CD14-positive monocyte (primary cell): ENCODE measurements at regions of chr6 and their contacts with region 1.

Region 1: GRCh38 chr6:13526727-13527670 is 39.6 kb upstream of the GFOD1 start:
- DNase-seq: peak; percentile 83 to 90 (median 90)
- H3K4me3 ChIP-seq: no peak overlapping the region
- H3K4me3 Mint-ChIP-seq: peak overlapping the region in 1 of 2 donors; percentile 51
- H3K27ac ChIP-seq: peak overlapping the region; percentile 79 to 93
- H3K27ac Mint-ChIP-seq: peak overlapping the region; percentile 79 to 91 (median 87)
- H3K4me1 ChIP-seq: peaks cover 32 to 35% of the 10 kb centered on the region in 2 donors
- H3K4me1 Mint-ChIP-seq: peaks cover 40% of the 10 kb centered on the region
- H3K27me3 ChIP-seq: no peaks in the 10 kb centered on the region
- H3K27me3 Mint-ChIP-seq: peaks cover 0 to under 1% (median 0%) of the 10 kb centered on the region in 3 donors
- CTCF ChIP-seq: peak; percentile 3

Region 2: DNA sequence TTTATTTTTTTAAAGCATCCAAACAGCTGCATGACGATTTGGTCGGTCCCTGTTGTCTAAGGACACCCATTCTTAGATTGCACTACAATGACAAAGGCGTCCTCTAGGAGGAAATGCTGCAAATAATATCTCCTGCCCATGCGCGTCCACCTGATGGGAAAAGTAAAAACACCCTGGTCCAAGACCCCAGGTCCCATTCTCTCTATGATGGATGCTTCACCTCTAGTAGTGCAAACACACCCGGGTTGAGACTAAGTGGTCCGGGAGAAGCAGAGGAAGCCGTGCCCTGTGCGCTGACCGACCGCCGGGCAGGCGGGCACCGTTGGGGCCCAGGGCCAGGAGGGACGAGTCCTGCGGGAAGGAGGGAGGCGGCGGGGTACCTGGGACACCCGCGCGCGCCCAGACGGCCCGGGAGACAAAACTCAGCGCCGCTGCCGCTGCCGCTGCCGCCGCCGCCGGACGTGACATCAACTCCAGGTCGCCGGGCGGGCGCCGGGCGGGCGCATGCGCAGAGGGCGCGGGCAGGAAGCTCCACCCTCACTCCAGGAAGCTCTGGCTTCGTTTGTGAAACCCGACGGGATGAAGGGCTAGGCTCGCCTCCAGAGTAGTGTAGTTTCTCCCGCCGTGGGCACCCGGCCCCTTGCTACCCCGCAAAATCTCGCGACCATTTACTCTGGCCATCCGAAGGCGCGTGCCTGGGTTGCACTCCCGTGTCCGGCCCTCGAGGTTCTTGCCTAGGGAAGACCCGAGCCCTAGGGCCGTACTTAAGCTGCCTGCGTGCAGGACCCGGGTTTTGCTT is 198.7 kb before region 1 on chr6 and contains the start of gene TBC1D7:
- intact Hi-C with region 1: loop called in 1 of 2 experiments (anchors 5 kb)
- DNase-seq: peak; percentile 87 to 91 (median 91)
- H3K4me3 ChIP-seq: peak within 1 kb of the TSS; percentile 88 to 98 (median 92)
- H3K4me3 Mint-ChIP-seq: peak within 1 kb of the TSS; percentile 90 to 93
- H3K27ac ChIP-seq: peak within 1 kb of the TSS; percentile 75 to 92
- H3K27ac Mint-ChIP-seq: peak within 1 kb of the TSS; percentile 93 to 98 (median 96)
- H3K4me1 ChIP-seq: peaks cover 6 to 17% of the 10 kb centered on the region in 2 donors
- H3K4me1 Mint-ChIP-seq: peaks cover 21% of the 10 kb centered on the region
- H3K27me3 ChIP-seq: no peaks in the 10 kb centered on the region
- H3K27me3 Mint-ChIP-seq: no peaks in the 10 kb centered on the region
- CTCF ChIP-seq: peak; percentile 19
- polyA plus RNA-seq, gene TBC1D7: 12.2 to 34.3 (median 34.3) TPM

Region 3: GRCh38 chr6:13407709-13408695 is 119.0 kb before region 1 on chr6:
- intact Hi-C with region 1: loop called in 1 of 2 experiments (anchors 5 kb)
- DNase-seq: peak; percentile 92 to 97 (median 94)
- H3K4me3 ChIP-seq: peak overlapping the region in 1 of 3 experiments; percentile 27
- H3K4me3 Mint-ChIP-seq: no peak overlapping the region
- H3K27ac ChIP-seq: peak overlapping the region; percentile 91 to 98
- H3K27ac Mint-ChIP-seq: peak overlapping the region; percentile 99 to 100 (median 100)
- H3K4me1 ChIP-seq: peaks cover 81 to 98% of the 10 kb centered on the region in 2 donors
- H3K4me1 Mint-ChIP-seq: peaks cover 87% of the 10 kb centered on the region
- H3K27me3 ChIP-seq: no peaks in the 10 kb centered on the region
- H3K27me3 Mint-ChIP-seq: peaks cover 0 to 6% (median 0%) of the 10 kb centered on the region in 3 donors
- CTCF ChIP-seq: no peak

Region 4: GRCh38 chr6:13487122-13488014 is 39.6 kb before region 1 on chr6 and contains the start of gene GFOD1:
- intact Hi-C with region 1: loop called in 1 of 2 experiments (anchors 5 kb)
- DNase-seq: peak; percentile 72 to 79 (median 77)
- H3K4me3 ChIP-seq: peak within 1 kb of the TSS; percentile 61 to 92 (median 64)
- H3K4me3 Mint-ChIP-seq: peak within 1 kb of the TSS; percentile 98 to 99
- H3K27ac ChIP-seq: peak within 1 kb of the TSS; percentile 75 to 86
- H3K27ac Mint-ChIP-seq: peak within 1 kb of the TSS; percentile 46 to 92 (median 86)
- H3K4me1 ChIP-seq: peaks cover 27 to 44% of the 10 kb centered on the region in 2 donors
- H3K4me1 Mint-ChIP-seq: peaks cover 47% of the 10 kb centered on the region
- H3K27me3 ChIP-seq: peaks cover 0 to 7% of the 10 kb centered on the region in 2 donors
- H3K27me3 Mint-ChIP-seq: peaks cover 3 to 14% (median 14%) of the 10 kb centered on the region in 3 donors
- CTCF ChIP-seq: peak; percentile 17
- polyA plus RNA-seq, gene GFOD1: 2.4 to 8.7 (median 2.4) TPM

Region 5: GRCh38 chr6:13496513-13497180 is 30.4 kb before region 1 on chr6:
- intact Hi-C with region 1: loop called in 1 of 2 experiments (anchors 5 kb)
- DNase-seq: no peak
- H3K4me3 ChIP-seq: no peak overlapping the region
- H3K4me3 Mint-ChIP-seq: no peak overlapping the region
- H3K27ac ChIP-seq: no peak overlapping the region
- H3K27ac Mint-ChIP-seq: no peak overlapping the region
- H3K4me1 ChIP-seq: peaks cover 5% of the 10 kb centered on the region in 2 donors
- H3K4me1 Mint-ChIP-seq: peaks cover 10% of the 10 kb centered on the region
- H3K27me3 ChIP-seq: no peaks in the 10 kb centered on the region
- H3K27me3 Mint-ChIP-seq: peaks cover 0 to 2% (median 0%) of the 10 kb centered on the region in 3 donors
- CTCF ChIP-seq: no peak

Region 6: DNA sequence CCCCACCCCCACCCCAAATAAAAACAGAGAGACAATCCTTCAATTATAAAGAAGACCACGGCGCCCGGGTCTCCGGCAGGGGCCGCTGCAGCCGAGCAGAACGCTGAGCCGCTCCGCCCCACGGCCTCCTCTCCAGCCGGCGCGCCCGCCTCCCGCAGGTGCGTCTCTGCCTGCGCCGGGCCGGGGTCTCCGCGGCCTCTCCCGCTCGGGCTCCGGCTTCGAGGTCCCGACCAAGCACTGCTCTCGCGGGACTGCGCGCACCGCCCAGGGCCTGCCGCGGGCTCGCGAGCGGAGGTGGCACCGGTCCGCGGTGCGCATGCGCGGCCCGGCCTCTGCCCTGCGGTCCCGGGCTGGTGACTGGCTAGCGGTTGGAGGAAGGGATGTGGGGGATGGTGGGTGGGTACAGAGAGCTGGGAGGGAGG is 47.2 kb after region 1 on chr6:
- intact Hi-C with region 1: loop called in 1 of 2 experiments (anchors 10 kb)
- DNase-seq: peak; percentile 85 to 89 (median 86)
- H3K4me3 ChIP-seq: peak overlapping the region; percentile 71 to 94 (median 87)
- H3K4me3 Mint-ChIP-seq: peak overlapping the region; percentile 96 to 97
- H3K27ac ChIP-seq: peak overlapping the region; percentile 92
- H3K27ac Mint-ChIP-seq: peak overlapping the region; percentile 95 to 99 (median 97)
- H3K4me1 ChIP-seq: peaks cover 11 to 16% of the 10 kb centered on the region in 2 donors
- H3K4me1 Mint-ChIP-seq: peaks cover 17% of the 10 kb centered on the region
- H3K27me3 ChIP-seq: no peaks in the 10 kb centered on the region
- H3K27me3 Mint-ChIP-seq: peaks cover 4 to 6% (median 4%) of the 10 kb centered on the region in 3 donors
- CTCF ChIP-seq: peak; percentile 40

Region 7: GRCh38 chr6:14095437-14095836 is 568.4 kb after region 1 on chr6:
- intact Hi-C with region 1: no loop called
- DNase-seq: peak in 1 of 3 donors; percentile 51
- H3K4me3 ChIP-seq: no peak overlapping the region
- H3K4me3 Mint-ChIP-seq: no peak overlapping the region
- H3K27ac ChIP-seq: no peak overlapping the region
- H3K27ac Mint-ChIP-seq: peak overlapping the region in 3 of 7 donors; percentile 57 to 94 (median 84)
- H3K4me1 ChIP-seq: peaks cover 29 to 44% of the 10 kb centered on the region in 2 donors
- H3K4me1 Mint-ChIP-seq: peaks cover 52% of the 10 kb centered on the region
- H3K27me3 ChIP-seq: no peaks in the 10 kb centered on the region
- H3K27me3 Mint-ChIP-seq: peaks cover 1 to 6% (median 3%) of the 10 kb centered on the region in 3 donors
- CTCF ChIP-seq: no peak